Sciatic nerve (tissue), 2 donors: ENCODE measurements at regions of chr19 and their contacts with region 1.

Region 1: GRCh38 chr19:35879770-35880317 is 11.5 kb downstream of the APLP1 start:
- DNase-seq: peak; percentile 95
- ATAC-seq: peak; percentile 95

Region 2: GRCh38 chr19:35931161-35931873 is 51.5 kb after region 1 on chr19:
- intact Hi-C with region 1: loop called (anchors 2 kb)
- DNase-seq: peak; percentile 99
- ATAC-seq: peak; percentile 99